GM12878 (cell line): ENCODE measurements at regions of chr7 and their contacts with region 1.

Region 1: DNA sequence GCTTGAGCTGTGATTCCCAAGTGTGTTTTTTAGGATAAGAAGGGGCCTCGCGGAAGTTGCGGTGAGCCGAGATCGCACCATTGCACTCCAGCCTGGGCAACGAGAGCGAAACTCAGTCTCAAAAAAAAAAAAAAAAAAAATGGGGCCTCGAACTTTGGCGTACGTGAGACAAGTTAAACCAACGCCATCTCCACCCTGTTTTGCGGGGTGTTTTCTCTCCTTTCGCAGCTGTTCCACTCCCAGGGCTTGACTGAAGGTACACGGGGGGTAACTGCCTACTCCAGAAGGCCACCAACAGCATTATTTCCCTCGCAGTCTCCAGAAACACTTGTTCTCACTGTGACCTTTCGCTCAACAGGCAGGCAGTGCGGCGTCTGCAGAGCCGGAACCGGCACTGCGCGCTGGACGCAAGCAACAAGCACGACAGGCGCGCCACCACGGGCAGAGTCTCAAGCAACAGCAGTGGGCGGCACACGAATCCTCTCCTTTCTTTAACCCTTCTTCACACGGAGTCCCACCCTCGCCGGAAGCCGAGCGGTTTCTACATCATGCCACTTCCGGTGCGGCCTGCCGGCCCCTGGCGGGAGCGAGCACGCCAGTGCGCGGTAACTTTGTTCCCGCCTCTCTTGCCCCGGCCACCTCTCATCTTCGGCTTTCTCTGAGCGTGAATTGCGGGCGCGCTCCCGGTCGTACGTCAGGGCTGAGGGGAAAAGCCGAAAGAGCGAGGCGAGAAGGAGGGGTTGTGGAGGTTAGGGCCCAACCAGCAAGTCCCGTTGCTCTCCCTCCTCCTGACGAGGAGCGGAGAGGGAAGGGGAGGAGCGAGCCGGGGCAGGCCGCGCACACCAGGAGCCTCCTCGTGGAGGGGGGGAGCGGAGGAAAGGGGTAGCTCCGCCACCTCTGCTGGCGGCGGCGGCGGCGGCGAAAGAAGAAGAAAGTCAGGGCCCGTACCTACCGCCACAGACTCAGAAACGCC is 814 bp upstream of the CDK13 start:
- DNase-seq: peak; percentile 98
- ATAC-seq: peak; percentile 80
- H3K4me3 ChIP-seq: peak overlapping the region; percentile 93
- H3K27ac ChIP-seq: peak overlapping the region; percentile 98
- H3K4me1 ChIP-seq: peaks cover 9% of the 10 kb centered on the region; the same call in 1 of the 2 replicates
- H3K27me3 ChIP-seq: no peaks in the 10 kb centered on the region
- CTCF ChIP-seq: no peak
- EP300 ChIP-seq: peak in 1 of 2 experiments; percentile 7; a peak in 1 of 4 replicates
- POLR2A ChIP-seq: peak; percentile 98
- RAD21 ChIP-seq: no peak

Region 2: DNA sequence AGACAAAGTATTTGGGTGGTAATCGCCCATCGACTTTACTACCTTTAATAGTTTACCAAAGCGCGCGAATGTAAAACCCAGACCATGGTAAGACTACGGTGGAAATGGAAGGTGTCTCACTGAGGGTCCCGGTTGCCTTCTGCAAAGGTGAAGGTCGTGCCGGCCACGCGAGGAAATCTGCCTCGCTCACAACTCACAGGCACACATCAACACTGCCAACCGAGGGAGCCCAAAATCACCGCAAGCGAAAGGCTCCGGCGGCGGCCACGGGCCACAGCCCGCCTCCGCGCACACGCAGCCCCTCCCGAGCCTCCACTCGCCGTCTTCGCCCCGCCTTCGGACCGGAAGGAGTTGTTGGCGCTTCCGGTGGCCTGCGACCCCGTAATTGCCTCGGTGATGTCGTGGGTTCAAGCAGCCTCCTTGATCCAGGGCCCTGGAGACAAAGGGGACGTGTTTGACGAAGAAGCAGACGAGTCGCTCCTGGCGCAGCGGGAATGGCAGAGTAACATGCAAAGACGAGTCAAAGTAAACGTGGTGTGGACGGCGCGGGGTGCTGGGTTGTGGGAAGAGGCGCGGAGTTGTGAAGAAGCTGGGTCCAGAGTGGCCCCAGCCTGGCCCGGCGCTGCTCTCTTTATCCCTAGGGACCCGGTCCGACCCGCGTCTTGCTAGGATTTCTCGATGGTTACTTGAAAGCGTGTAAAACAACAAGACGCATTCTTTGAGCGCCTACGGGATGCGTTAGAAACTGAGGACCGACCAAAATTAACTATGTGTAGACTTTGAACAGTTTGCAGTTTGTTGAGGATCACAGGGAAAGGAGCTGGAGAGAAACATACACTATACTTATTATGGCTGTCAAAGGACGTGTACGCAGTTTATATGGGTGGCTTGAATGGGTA is 383.0 kb before region 1 on chr7 and contains the start of gene YAE1:
- CTCF ChIA-PET with region 1: no interaction called
- POLR2A ChIA-PET with region 1: no interaction called
- RAD21 ChIA-PET with region 1: no interaction called
- SMC1A ChIA-PET with region 1: no interaction called
- in situ Hi-C with region 1: no loop called
- intact Hi-C with region 1: loop called (anchors 5 kb)
- DNase-seq: peak; percentile 54
- ATAC-seq: peak; percentile 99
- H3K4me3 ChIP-seq: peak within 1 kb of the TSS; percentile 96
- H3K27ac ChIP-seq: peak within 1 kb of the TSS; percentile 70
- H3K4me1 ChIP-seq: peaks cover 3% of the 10 kb centered on the region; the same call in 1 of the 2 replicates
- H3K27me3 ChIP-seq: no peaks in the 10 kb centered on the region
- CTCF ChIP-seq: no peak
- EP300 ChIP-seq: no peak
- POLR2A ChIP-seq: peak; percentile 98
- RAD21 ChIP-seq: no peak
- polyA plus RNA-seq, gene YAE1: 33.5 to 35.8 TPM

Region 3: GRCh38 chr7:39709768-39710311 is 239.4 kb before region 1 on chr7:
- CTCF ChIA-PET with region 1: no interaction called
- POLR2A ChIA-PET with region 1: no interaction called
- RAD21 ChIA-PET with region 1: no interaction called
- SMC1A ChIA-PET with region 1: no interaction called
- in situ Hi-C with region 1: no loop called
- intact Hi-C with region 1: no loop called
- DNase-seq: peak; percentile 13
- ATAC-seq: peak; percentile 94
- H3K4me3 ChIP-seq: no peak overlapping the region
- H3K27ac ChIP-seq: no peak overlapping the region
- H3K4me1 ChIP-seq: no peaks in the 10 kb centered on the region
- H3K27me3 ChIP-seq: no peaks in the 10 kb centered on the region
- CTCF ChIP-seq: no peak
- EP300 ChIP-seq: no peak
- POLR2A ChIP-seq: no peak
- RAD21 ChIP-seq: no peak

Region 4: GRCh38 chr7:39894904-39895303 is 54.3 kb before region 1 on chr7:
- CTCF ChIA-PET with region 1: interaction called, 16 read pairs
- POLR2A ChIA-PET with region 1: interaction called, 5 read pairs
- RAD21 ChIA-PET with region 1: interaction called, 23 read pairs
- SMC1A ChIA-PET with region 1: interaction called, 12 read pairs
- in situ Hi-C with region 1: no loop called
- intact Hi-C with region 1: no loop called
- DNase-seq: no peak
- ATAC-seq: no peak
- H3K4me3 ChIP-seq: no peak overlapping the region
- H3K27ac ChIP-seq: no peak overlapping the region
- H3K4me1 ChIP-seq: no peaks in the 10 kb centered on the region
- H3K27me3 ChIP-seq: peaks cover 0 to 1% of the 10 kb centered on the region in 2 experiments; a peak in 1 of 4 replicates
- CTCF ChIP-seq: no peak
- EP300 ChIP-seq: no peak
- POLR2A ChIP-seq: no peak
- RAD21 ChIP-seq: no peak

Region 5: DNA sequence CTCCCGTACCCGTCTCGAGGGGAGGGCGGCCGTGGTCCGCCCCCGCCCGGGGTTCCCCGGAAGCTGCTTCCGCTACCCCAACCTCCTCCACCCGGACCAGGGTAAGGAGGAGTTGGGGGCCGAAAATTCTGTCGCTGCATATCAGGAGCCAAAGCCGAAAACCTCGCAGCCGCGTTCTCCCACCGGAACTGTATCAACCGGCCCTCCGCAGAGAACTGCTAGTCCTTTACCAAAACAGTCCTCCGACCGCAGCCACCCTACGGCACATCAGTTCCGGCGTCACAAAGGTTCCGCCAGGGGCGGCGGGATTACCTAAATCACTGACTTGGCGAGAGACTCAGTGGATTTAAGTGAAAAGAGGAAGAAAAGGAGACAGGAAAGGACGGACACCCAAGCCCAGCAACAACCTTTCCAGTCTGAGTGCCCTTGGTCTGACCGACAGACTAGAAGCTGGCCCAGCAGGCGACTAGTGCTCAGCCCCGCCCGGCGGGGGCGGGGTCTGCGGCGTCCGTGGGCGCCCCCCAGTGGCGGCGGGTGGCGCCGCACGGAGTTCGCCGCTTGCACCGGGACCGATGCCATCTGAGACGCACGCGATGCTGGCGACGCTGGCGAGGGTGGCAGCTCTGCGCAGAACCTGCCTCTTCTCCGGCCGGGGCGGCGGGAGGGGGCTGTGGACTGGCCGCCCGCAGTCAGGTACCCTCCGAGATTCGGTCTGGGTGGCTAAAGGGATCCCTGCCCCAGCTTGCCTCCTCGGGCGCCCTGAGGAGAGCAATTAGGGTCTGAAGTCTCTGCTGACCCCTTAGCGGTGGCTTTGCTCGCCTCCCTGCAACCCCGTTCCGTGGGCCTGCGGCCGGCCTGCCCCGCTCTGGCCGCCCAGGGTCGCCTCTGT is 185.4 kb after region 1 on chr7 and contains the starts of genes MPLKIP and SUGCT:
- CTCF ChIA-PET with region 1: interaction called, 3 read pairs
- POLR2A ChIA-PET with region 1: no interaction called
- RAD21 ChIA-PET with region 1: interaction called, 4 read pairs
- SMC1A ChIA-PET with region 1: interaction called, 4 read pairs
- in situ Hi-C with region 1: no loop called
- intact Hi-C with region 1: loop called (anchors 2 kb)
- DNase-seq: peak; percentile 59
- ATAC-seq: peak; percentile 94
- H3K4me3 ChIP-seq: peak within 1 kb of the TSS; percentile 90
- H3K27ac ChIP-seq: peak within 1 kb of the TSS; percentile 92
- H3K4me1 ChIP-seq: peaks cover 7% of the 10 kb centered on the region
- H3K27me3 ChIP-seq: no peaks in the 10 kb centered on the region; a peak in 1 of 4 replicates
- CTCF ChIP-seq: peak; percentile 84 to 98 (median 90); a peak in 5 of 6 replicates
- EP300 ChIP-seq: no peak
- POLR2A ChIP-seq: peak; percentile 87
- RAD21 ChIP-seq: no peak
- polyA plus RNA-seq, gene MPLKIP: 4.6 to 15.2 TPM
- polyA plus RNA-seq, gene SUGCT: 0.35 to 0.79 TPM

Region 6: DNA sequence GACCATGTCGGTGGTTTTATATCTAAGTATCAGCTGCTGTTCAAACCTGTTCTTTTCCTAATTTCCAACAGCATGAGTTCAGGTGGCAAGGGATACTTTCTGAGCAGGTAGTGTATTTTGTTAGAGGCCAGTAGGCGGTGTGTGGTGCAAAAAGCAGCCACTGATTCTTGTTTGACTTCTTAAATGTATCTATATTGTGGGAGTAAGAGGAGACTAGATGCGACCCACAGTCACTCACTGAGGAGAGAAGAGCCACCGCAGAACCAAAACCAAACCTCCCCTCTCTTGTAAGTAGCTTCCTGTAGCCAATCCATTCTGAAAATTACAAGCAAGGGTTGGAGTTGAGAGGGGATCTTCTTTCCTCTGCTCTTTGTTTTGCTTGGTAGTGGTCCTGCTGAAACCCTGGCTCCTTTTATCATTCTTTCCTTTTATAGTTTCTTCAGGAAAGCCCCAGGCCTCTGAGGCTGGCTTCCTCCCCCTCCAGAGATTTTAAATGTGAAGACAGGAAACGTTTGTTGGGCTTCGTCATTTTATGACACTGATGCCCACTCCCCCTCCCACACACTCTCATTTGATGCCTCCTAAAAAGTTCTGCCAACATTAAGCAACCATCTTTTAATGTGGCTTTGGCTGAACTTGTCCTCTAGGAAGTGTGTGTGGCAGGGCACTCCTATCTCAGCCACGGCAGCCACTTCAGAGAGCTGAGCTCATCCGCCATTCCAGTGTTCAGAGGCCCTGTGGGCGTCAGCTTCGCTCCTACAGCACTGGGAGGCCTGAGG is 751.6 kb after region 1 on chr7:
- CTCF ChIA-PET with region 1: no interaction called
- POLR2A ChIA-PET with region 1: no interaction called
- RAD21 ChIA-PET with region 1: no interaction called
- SMC1A ChIA-PET with region 1: no interaction called
- in situ Hi-C with region 1: no loop called
- intact Hi-C with region 1: loop called (anchors 10 kb)
- DNase-seq: no peak
- ATAC-seq: peak; percentile 75
- H3K4me3 ChIP-seq: no peak overlapping the region
- H3K27ac ChIP-seq: no peak overlapping the region
- H3K4me1 ChIP-seq: no peaks in the 10 kb centered on the region
- H3K27me3 ChIP-seq: no peaks in the 10 kb centered on the region
- CTCF ChIP-seq: peak in 1 of 3 experiments; percentile 16; a peak in 1 of 6 replicates
- EP300 ChIP-seq: no peak
- POLR2A ChIP-seq: no peak
- RAD21 ChIP-seq: no peak